Activated CD4-positive, alpha-beta memory T cell treated with anti-CD3 and anti-CD28 coated beads for 36 hours (primary cell): ENCODE measurements at regions of chr20 and their contacts with region 1.

Region 1: GRCh38 chr20:5788385-5788895 is 38.2 kb downstream of the SHLD1 start:
- DNase-seq: peak; percentile 77
- H3K4me3 Mint-ChIP-seq: no peak overlapping the region
- H3K27ac Mint-ChIP-seq: peak overlapping the region; percentile 39
- H3K4me1 Mint-ChIP-seq: peaks cover 13% of the 10 kb centered on the region
- H3K27me3 Mint-ChIP-seq: no peaks in the 10 kb centered on the region

Region 2: GRCh38 chr20:5557123-5557522 is 231.3 kb before region 1 on chr20:
- CTCF ChIA-PET with region 1: interaction called, 79 read pairs
- POLR2A ChIA-PET with region 1: no interaction called
- intact Hi-C with region 1: loop called (anchors 1 kb)
- DNase-seq: peak; percentile 79
- H3K4me3 Mint-ChIP-seq: no peak overlapping the region
- H3K27ac Mint-ChIP-seq: peak overlapping the region; percentile 21
- H3K4me1 Mint-ChIP-seq: peaks cover 5% of the 10 kb centered on the region
- H3K27me3 Mint-ChIP-seq: no peaks in the 10 kb centered on the region

Region 3: GRCh38 chr20:5580936-5581708 is 207.3 kb before region 1 on chr20:
- CTCF ChIA-PET with region 1: interaction called, 13 read pairs
- POLR2A ChIA-PET with region 1: no interaction called
- intact Hi-C with region 1: no loop called
- DNase-seq: no peak
- H3K4me3 Mint-ChIP-seq: no peak overlapping the region
- H3K27ac Mint-ChIP-seq: no peak overlapping the region
- H3K4me1 Mint-ChIP-seq: peaks cover 15% of the 10 kb centered on the region
- H3K27me3 Mint-ChIP-seq: no peaks in the 10 kb centered on the region

Region 4: DNA sequence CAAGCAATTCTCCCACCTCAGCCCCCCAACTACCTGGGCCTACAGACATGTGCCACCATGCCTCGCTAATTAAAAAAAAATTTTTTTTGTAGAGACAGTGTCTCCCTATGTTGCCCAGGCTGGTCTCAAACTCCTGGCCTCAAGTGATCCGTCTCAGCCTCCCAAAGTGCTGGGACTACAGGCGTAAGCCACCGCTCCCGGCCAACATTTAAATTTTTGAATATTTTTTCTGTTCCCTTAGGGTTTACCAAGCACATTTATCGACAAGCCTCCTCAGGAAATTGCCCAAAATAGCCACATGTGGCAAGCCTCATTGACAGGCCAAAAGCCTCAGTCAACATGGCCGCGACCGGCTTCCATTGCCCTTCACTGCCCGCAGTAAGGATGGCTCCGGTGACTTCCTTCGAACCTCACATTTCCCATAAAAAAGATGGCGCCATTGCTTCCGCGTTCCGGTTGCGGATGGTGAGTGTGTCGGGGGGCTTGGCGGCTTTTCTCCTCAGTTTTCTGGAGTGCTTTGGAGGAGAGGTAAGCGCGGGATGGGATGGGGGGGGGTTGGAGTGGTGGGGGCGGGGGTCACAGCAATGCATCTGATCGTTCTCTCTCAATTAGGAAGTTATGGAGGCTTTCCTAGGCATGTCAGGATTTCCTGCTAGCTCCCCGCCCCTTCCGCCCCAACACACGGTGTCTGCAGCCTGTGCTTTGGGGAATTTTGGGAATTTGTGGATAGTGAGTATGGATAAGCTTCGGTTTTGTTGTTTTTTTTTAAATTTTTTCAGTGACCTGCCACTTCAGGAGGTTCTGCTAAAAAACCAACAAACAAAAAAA is 38.3 kb before region 1 on chr20 and contains the start of gene SHLD1:
- CTCF ChIA-PET with region 1: interaction called, 7 read pairs
- POLR2A ChIA-PET with region 1: no interaction called
- intact Hi-C with region 1: loop called (anchors 2 kb)
- DNase-seq: peak; percentile 88
- H3K4me3 Mint-ChIP-seq: peak within 1 kb of the TSS; percentile 90
- H3K27ac Mint-ChIP-seq: peak within 1 kb of the TSS; percentile 95
- H3K4me1 Mint-ChIP-seq: peaks cover 18% of the 10 kb centered on the region
- H3K27me3 Mint-ChIP-seq: no peaks in the 10 kb centered on the region
- total RNA-seq, gene SHLD1: 9.0 to 9.8 TPM